ENCODE measurements at regions of chrX and their contacts with region 1.

Region 1: GRCh38 chrX:41180194-41180908 is 95.1 kb downstream of the USP9X start:
- DNase-seq: peak; percentile 62
- H3K4me3 Mint-ChIP-seq: no peak overlapping the region
- H3K27ac Mint-ChIP-seq: peak overlapping the region; percentile 84
- H3K4me1 Mint-ChIP-seq: peaks cover 33% of the 10 kb centered on the region
- H3K27me3 Mint-ChIP-seq: no peaks in the 10 kb centered on the region

Region 2: DNA sequence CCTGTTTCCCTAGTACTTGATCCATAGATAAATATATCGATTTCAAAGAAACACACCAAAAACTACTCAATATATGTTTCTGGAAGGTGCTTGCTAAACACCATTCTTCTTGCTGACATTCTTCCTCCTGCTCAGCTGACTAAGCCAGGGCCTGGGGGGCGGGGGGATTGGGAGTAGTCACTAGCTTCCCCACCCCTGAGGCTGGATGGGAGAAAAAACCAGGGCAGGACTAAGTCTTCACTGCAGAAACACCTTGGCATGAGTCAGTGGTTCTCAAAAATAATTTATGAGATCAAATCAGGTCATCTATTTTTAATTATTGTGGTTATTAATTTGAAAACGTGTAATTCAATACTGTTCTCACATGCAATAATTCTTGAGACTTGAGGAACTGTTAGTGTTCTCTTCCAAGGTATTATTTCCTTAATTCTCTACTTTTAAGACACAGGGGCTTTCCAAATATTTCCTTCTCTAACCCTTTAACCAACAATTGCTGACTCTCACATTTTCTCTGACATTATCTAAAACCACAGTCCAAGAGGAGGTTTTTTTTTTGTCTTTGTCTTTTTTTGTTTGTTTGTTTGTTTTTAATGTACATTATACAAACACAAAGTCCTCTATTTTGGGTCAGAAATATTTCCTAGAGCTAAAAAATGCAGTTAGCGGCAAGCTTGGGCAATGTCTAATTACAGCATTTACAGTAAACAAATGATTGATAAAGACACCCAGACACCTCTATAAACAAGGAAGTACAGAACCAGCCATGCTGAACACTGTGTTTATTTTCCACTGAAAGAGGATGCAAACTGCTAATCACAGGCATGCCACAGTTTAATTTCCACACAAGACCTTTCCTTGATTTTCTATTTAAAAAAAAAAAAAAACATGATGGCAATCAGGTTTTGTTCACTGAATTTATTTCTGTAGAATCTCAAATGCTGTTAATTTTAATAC is 215.4 kb before region 1 on chrX:
- CTCF ChIA-PET with region 1: no interaction called
- POLR2A ChIA-PET with region 1: no interaction called
- intact Hi-C with region 1: no loop called
- DNase-seq: no peak
- H3K4me3 Mint-ChIP-seq: no peak overlapping the region
- H3K27ac Mint-ChIP-seq: no peak overlapping the region
- H3K4me1 Mint-ChIP-seq: no peaks in the 10 kb centered on the region
- H3K27me3 Mint-ChIP-seq: no peaks in the 10 kb centered on the region

Region 3: GRCh38 chrX:41167888-41168287 is 12.5 kb before region 1 on chrX:
- CTCF ChIA-PET with region 1: interaction called, 12 read pairs
- POLR2A ChIA-PET with region 1: interaction called, 3 read pairs
- intact Hi-C with region 1: no loop called
- DNase-seq: no peak
- H3K4me3 Mint-ChIP-seq: no peak overlapping the region
- H3K27ac Mint-ChIP-seq: no peak overlapping the region
- H3K4me1 Mint-ChIP-seq: peaks cover 5% of the 10 kb centered on the region
- H3K27me3 Mint-ChIP-seq: no peaks in the 10 kb centered on the region

Region 4: GRCh38 chrX:41335656-41336331 is 155.4 kb after region 1 on chrX:
- CTCF ChIA-PET with region 1: no interaction called
- POLR2A ChIA-PET with region 1: no interaction called
- intact Hi-C with region 1: no loop called
- DNase-seq: peak; percentile 48
- H3K4me3 Mint-ChIP-seq: peak overlapping the region; percentile 93
- H3K27ac Mint-ChIP-seq: peak overlapping the region; percentile 100
- H3K4me1 Mint-ChIP-seq: peaks cover 24% of the 10 kb centered on the region
- H3K27me3 Mint-ChIP-seq: peaks cover 1% of the 10 kb centered on the region